ENCODE measurements at regions of chr1 and their contacts with region 1.

Region 1: DNA sequence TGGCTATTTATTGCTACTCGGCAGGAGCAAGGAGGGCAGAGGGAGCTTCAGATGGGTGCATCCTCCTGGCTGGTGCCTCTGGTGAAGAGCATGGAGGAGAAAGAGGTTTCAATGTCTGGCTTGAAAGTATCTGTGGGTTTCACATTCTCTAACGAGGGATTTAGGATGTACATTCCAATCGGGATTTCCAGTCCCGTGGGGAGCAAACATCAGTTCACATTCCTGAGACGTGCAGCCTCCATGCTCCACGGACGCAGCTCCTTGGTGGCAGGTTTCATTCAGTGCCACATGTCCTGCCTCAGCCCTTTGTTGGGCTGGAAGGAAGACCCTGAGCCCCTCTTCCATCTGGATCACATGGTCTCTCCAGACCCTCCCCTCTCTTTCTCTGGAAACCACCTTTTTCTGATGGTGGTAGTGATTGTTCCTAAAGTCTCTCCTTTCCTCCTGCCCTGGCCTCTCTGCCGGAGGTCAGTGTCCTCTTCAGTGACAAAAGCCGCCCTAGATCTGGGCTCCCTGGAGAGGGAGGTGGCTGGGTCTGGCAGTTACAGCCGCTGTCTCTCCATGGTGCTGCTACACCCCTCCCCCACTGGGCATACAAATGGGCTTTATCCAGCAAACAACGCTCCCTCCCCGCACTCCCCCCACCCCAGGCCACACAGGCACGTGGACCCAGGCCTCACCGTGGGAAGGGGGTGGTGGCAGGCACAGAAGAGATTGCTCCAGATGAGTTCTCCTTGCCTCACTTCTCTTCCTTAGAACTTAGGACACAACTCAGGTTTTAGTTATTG is 826 bp upstream of the CA14 start:
- DNase-seq: no peak
- H3K27ac ChIP-seq: peak overlapping the region; percentile 16; the same call in 1 of the 2 replicates
- CTCF ChIP-seq: no peak

Region 2: DNA sequence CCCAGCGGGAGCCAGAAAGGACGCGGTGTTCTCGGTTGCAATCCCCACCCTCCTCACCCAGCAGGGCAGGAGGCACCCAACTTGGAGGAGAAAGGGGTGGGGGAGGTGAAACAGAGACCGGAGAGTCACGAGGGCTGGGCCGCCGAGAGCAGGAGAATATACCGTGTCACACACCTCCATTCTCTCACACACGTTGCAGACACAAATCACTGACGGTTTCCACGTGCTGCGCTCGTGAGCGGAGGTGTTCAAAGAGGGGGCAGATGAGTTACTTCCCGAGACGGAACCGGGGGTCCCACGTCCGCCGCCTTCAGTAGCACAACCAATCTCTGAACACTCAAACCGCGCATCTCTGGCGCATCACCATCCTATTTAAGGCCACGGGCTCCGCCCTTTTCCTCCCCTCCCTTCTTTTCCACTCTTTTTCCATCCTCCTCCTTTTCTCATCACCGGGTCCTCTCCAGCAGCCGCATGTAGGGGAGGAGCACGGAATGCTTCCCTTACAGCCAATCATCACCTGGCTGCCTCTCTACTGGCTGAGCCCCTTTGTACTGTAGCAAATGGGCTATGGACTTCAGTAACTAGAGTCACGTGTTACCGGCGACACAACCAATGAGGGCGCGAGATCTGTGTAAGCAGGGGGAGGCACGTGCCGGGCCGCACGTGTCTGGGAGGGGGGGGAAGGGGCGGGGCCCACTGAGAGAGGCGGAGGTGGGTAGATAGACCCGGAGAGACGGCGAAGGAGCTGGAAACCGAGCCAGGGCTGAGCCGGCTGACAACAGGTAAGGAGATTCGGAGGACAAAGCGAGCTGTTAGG is 25.3 kb after region 1 on chr1 and contains the start of gene CIART:
- CTCF ChIA-PET with region 1: interaction called, 21 read pairs
- POLR2A ChIA-PET with region 1: no interaction called
- DNase-seq: peak; percentile 98
- H3K27ac ChIP-seq: peak within 1 kb of the TSS; percentile 97
- CTCF ChIP-seq: no peak

Region 3: GRCh38 chr1:150346316-150346715 is 89.6 kb after region 1 on chr1:
- CTCF ChIA-PET with region 1: no interaction called
- POLR2A ChIA-PET with region 1: no interaction called
- DNase-seq: no peak
- H3K27ac ChIP-seq: no peak overlapping the region
- CTCF ChIP-seq: no peak

Measured in RWPE1 (cell line).